Gastrocnemius medialis (tissue), 4 donors: ENCODE measurements at regions of chr5 and their contacts with region 1.

Region 1: DNA sequence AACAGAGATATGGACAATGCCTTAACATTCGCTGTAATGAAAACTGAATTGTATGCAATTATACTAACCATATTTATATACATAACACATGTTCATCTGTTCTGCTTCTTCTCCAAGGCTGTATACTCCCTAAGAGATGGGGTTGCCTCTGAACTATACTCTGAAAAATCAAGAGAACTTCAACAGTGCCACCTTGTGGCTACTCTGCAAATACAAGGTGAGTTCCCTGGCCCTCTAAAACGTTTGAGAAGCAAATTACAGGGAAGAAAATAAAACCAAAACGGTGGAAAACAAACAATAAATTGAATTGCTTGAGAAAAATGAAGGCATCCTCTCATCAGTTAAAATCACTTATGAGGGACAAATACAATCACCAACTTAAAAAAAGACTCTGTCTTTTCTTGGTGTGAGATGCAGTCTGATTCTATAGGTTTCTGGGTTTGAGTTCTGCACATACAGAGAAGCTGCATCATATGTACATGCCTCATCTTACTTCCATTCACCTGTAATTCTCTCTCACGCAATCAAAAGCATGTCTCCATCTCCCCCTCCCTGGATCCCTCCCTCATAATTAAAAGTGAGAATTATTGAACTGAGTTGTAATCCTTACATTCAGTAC is 98.6 kb downstream of the FBXW11 start:
- DNase-seq: no peak
- ATAC-seq: peak in 1 of 2 donors; percentile 68
- H3K4me3 ChIP-seq: no peak overlapping the region
- H3K27ac ChIP-seq: no peak overlapping the region
- H3K4me1 ChIP-seq: peaks cover 0 to 4% of the 10 kb centered on the region in 2 donors
- H3K27me3 ChIP-seq: no peaks in the 10 kb centered on the region
- CTCF ChIP-seq: peak; percentile 56 to 83 (median 66)
- POLR2A ChIP-seq: no peak

Region 2: GRCh38 chr5:172006321-172007174 is 98.7 kb after region 1 on chr5 and contains the start of gene FBXW11:
- in situ Hi-C with region 1: no loop called
- intact Hi-C with region 1: loop called (anchors 1 kb)
- DNase-seq: peak; percentile 93 to 95
- ATAC-seq: peak; percentile 95 to 96
- H3K4me3 ChIP-seq: peak within 1 kb of the TSS; percentile 80 to 99 (median 98)
- H3K27ac ChIP-seq: peak within 1 kb of the TSS; percentile 89 to 99 (median 94)
- H3K4me1 ChIP-seq: peaks cover 46 to 49% of the 10 kb centered on the region in 2 donors
- H3K27me3 ChIP-seq: no peaks in the 10 kb centered on the region
- CTCF ChIP-seq: peak in 1 of 5 experiments; percentile 9
- POLR2A ChIP-seq: peak; percentile 76 to 77
- total RNA-seq, gene FBXW11: 68.5 to 80.8 (median 72.2) TPM

Region 3: DNA sequence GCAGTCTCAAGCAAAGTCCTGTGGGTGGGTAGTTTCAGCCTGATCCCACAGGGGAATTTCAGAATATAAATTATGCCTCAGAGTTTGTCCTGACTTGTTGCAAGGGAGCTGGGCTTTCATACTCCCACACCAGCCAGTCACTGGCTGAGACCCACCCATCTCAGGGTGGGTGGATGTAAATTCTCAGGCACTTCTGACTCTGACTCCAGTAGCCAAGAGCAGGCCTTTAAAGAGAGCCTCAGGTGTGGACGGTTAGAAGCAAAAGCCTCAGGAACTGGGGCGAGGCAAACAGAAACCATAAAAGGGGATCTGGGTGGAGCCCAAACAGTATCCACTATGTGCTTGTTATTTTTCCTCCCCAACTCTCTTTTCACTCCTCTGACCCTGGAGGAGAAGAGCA is 127.2 kb after region 1 on chr5:
- in situ Hi-C with region 1: loop called in 3 of 4 experiments (anchors 5 to 10 kb)
- intact Hi-C with region 1: loop called (anchors 1 kb)
- DNase-seq: no peak
- ATAC-seq: no peak
- H3K4me3 ChIP-seq: no peak overlapping the region
- H3K27ac ChIP-seq: no peak overlapping the region
- H3K4me1 ChIP-seq: peaks cover 0 to 3% of the 10 kb centered on the region in 2 donors
- H3K27me3 ChIP-seq: no peaks in the 10 kb centered on the region
- CTCF ChIP-seq: no peak
- POLR2A ChIP-seq: no peak

Region 4: GRCh38 chr5:172059661-172060100 is 151.8 kb after region 1 on chr5:
- in situ Hi-C with region 1: no loop called
- intact Hi-C with region 1: loop called (anchors 1 kb)
- DNase-seq: no peak
- ATAC-seq: no peak
- H3K4me3 ChIP-seq: no peak overlapping the region
- H3K27ac ChIP-seq: no peak overlapping the region
- H3K4me1 ChIP-seq: no peaks in the 10 kb centered on the region
- H3K27me3 ChIP-seq: no peaks in the 10 kb centered on the region
- CTCF ChIP-seq: peak in 4 of 5 experiments; percentile 19 to 63 (median 44)
- POLR2A ChIP-seq: no peak

Region 5: GRCh38 chr5:172283020-172283861 is 375.4 kb after region 1 on chr5 and contains the start of gene UBTD2:
- in situ Hi-C with region 1: loop called in 1 of 4 experiments (anchors 25 kb)
- intact Hi-C with region 1: no loop called
- DNase-seq: peak; percentile 64 to 73
- ATAC-seq: peak; percentile 90 to 92
- H3K4me3 ChIP-seq: peak within 1 kb of the TSS; percentile 85 to 100 (median 91)
- H3K27ac ChIP-seq: peak within 1 kb of the TSS; percentile 91 to 98 (median 94)
- H3K4me1 ChIP-seq: peaks cover 16 to 21% of the 10 kb centered on the region in 2 donors
- H3K27me3 ChIP-seq: no peaks in the 10 kb centered on the region
- CTCF ChIP-seq: peak; percentile 39 to 73 (median 58)
- POLR2A ChIP-seq: no peak
- total RNA-seq, gene UBTD2: 6.0 to 11.4 (median 9.8) TPM